Posterior cingulate gyrus (tissue), 11 donors: ENCODE measurements at regions of chrX and their contacts with region 1.

Region 1: GRCh38 chrX:43939187-43939926 is 33.8 kb downstream of the NDP start:
- DNase-seq: no peak

Region 2: GRCh38 chrX:43836435-43837184 is 102.7 kb before region 1 on chrX:
- intact Hi-C with region 1: loop called (anchors 5 kb)
- DNase-seq: no peak

Region 3: DNA sequence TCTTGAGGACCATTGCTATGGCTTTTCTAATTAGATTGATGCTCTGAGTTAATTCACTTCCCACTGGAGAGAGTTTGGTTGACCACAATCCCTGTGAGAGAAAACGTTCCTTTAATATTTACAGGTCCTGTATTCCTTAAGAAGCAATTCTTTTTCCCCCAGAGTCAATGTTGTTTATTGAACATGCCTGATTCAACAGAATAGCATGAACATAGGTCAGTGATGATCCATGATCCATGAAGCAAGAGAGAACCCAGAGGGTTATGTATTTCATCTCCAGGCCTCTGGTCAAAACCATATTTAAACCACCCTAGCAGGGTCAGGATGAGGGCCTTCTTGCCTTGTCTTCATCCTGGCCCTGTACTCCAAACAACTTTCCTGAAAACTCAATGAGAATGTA is 443.5 kb after region 1 on chrX:
- intact Hi-C with region 1: no loop called
- DNase-seq: no peak